H1 (cell line): ENCODE measurements at regions of chr15 and their contacts with region 1.

Region 1: DNA sequence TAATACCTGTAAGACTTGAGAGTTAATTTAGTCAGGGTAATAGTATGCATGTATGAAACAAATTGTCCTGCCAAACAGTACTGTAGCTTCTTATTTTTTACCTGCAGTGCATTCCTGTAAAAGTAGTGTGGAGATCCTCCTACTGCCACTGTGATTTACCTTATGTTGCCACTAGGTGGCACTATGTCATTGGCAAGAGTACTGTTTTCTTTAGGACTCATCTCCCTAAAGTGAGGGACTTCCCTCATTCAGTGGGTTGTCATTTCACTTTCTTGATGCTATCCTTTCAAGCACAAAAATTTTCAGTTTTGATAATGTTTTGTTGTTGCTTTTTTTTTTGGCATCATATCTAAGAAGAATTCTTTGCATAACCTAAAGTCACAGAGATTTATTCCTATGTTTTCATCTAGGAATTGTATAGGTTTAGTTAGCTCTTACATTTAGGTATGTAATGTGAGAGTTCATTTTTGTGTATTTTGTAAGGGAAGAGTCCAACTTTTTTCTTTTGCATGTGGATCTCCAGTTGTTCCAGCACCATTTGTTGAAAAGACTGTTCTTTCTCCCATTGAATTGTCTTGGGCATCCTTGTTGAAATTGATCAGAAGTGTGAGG is 105.7 kb downstream of the AKAP13 start:
- DNase-seq: peak in 1 of 2 experiments; percentile 69
- H3K4me3 ChIP-seq: no peak overlapping the region
- H3K27ac ChIP-seq: no peak overlapping the region
- H3K4me1 ChIP-seq: peaks cover 0 to 4% (median 0%) of the 10 kb centered on the region in 4 experiments; a peak in 2 of 7 replicates
- H3K27me3 ChIP-seq: no peaks in the 10 kb centered on the region
- CTCF ChIP-seq: peak in 2 of 3 experiments; percentile 68 to 72; a peak in 3 of 4 replicates
- EP300 ChIP-seq: no peak
- POLR2A ChIP-seq: no peak
- RAD21 ChIP-seq: peak; percentile 77 to 82

Region 2: DNA sequence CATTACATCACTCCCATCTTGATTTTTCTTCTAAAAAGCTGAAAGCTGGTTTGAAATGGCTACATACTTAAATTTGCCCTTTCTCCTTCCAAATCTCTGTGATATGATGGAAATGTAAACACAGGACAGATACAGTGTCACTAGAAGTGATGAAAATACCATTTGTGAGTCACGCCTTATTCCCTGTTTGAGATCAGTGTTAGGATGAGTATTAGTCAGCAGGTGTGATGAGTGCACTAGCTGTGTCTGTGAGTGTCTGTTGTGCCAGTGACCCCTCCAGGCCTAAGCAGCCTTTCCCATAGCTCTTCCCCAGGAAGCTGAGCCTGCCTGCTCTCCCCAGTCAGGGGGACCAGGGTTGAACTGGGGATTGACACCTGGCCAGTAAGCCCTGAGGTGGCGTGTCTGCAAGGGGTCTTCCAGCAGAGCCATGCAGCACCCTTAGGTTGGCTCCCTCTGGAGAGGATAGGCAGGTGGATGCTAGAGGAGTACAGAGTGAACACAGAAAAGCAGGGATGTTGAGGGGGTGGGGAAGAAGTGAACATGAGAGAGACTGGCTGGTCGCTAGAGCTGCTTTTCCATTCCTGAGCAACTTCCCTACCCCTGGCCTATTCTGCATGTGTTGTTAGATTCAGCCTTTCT is 412.4 kb before region 1 on chr15:
- CTCF ChIA-PET with region 1: no interaction called
- POLR2A ChIA-PET with region 1: no interaction called
- DNase-seq: no peak
- H3K4me3 ChIP-seq: no peak overlapping the region
- H3K27ac ChIP-seq: no peak overlapping the region
- H3K4me1 ChIP-seq: no peaks in the 10 kb centered on the region
- H3K27me3 ChIP-seq: no peaks in the 10 kb centered on the region
- CTCF ChIP-seq: no peak
- EP300 ChIP-seq: no peak
- POLR2A ChIP-seq: no peak
- RAD21 ChIP-seq: no peak

Region 3: DNA sequence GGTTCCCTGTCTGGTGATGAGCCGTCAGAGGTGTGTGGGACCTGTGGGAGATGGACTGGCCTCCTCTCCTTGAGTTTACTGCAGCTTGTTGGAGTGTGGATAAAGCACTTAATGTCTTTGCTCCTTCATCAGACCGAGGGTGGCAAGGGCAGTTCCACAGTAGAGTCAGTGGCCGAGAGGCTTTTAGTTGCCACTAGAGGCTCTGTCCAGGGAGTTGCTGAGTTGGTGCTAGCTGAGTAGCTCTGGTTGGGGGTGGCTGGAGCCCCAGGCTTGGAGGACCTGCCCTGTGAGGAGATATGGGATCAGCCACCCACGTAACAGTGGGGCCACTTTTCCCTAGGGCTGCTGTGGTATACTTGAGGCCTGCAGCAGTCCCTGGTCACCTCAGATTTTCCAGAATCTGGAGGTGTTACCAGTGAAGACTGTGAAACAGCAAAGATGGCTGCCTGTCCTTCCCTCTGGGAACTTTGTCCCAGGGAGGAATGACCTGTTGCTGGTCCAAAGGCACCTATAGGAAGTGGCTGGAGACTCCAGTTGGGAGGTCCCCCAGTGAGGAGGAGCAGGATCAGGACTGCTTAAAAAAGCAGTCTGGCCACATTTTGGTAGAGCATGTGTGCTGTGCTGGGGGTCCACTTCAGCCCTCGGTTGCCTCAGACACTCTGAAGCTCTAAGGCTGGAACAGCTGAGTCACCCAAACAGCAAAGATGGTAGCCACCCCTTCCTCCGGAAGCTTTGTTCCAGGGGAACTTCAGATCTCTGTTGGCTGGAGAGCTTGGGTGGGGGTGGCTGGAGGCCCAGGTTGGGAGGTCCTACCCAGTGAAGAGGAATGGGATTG is 32.8 kb before region 1 on chr15:
- CTCF ChIA-PET with region 1: no interaction called
- POLR2A ChIA-PET with region 1: no interaction called
- DNase-seq: no peak
- H3K4me3 ChIP-seq: no peak overlapping the region
- H3K27ac ChIP-seq: no peak overlapping the region
- H3K4me1 ChIP-seq: peaks cover 0 to 5% (median 0%) of the 10 kb centered on the region in 4 experiments; a peak in 2 of 7 replicates
- H3K27me3 ChIP-seq: no peaks in the 10 kb centered on the region
- CTCF ChIP-seq: no peak
- EP300 ChIP-seq: no peak
- POLR2A ChIP-seq: no peak
- RAD21 ChIP-seq: no peak

Region 4: DNA sequence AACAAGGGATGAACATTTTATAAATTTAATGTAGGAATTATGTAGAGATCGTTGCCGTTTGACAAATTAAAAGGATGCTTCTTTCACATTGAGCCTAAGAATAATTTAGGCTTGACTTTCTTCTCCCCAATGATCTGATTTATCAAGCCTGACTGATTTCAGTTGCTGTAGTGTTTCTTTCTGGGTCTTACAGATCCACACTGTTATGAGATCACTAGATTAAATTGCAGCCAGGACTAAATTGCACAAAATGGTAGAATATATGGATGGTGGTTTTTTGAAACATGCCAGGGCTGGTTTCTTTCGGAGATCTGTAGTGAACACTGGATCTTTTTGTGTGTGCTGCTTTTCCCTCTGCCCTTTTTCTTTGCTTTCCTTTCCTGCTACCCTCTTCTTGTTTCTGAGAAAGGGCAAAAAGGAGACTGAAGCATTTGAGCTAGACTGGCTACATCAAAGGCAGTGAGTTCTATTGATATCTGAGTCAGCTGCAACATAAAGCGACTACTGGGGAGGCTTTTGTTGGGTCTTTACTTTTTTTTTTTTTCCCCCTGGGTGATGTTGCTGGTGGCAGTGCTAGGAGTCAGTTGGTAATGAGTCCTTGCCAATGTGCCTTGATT is 22.7 kb before region 1 on chr15:
- CTCF ChIA-PET with region 1: no interaction called
- POLR2A ChIA-PET with region 1: no interaction called
- DNase-seq: no peak
- H3K4me3 ChIP-seq: no peak overlapping the region
- H3K27ac ChIP-seq: no peak overlapping the region
- H3K4me1 ChIP-seq: peaks cover 0 to 5% (median 2%) of the 10 kb centered on the region in 4 experiments; a peak in 5 of 7 replicates
- H3K27me3 ChIP-seq: no peaks in the 10 kb centered on the region
- CTCF ChIP-seq: no peak
- EP300 ChIP-seq: no peak
- POLR2A ChIP-seq: no peak
- RAD21 ChIP-seq: no peak

Region 5: GRCh38 chr15:85475317-85475701 is 10.8 kb before region 1 on chr15:
- CTCF ChIA-PET with region 1: interaction called, 28 read pairs
- POLR2A ChIA-PET with region 1: no interaction called
- DNase-seq: no peak
- H3K4me3 ChIP-seq: no peak overlapping the region
- H3K27ac ChIP-seq: no peak overlapping the region
- H3K4me1 ChIP-seq: peaks cover 0 to 9% (median 8%) of the 10 kb centered on the region in 4 experiments; a peak in 4 of 7 replicates
- H3K27me3 ChIP-seq: no peaks in the 10 kb centered on the region
- CTCF ChIP-seq: no peak
- EP300 ChIP-seq: no peak
- POLR2A ChIP-seq: no peak
- RAD21 ChIP-seq: no peak

Region 6: GRCh38 chr15:85497172-85497569 is 11.1 kb after region 1 on chr15:
- CTCF ChIA-PET with region 1: interaction called, 13 read pairs
- POLR2A ChIA-PET with region 1: interaction called, 3 read pairs
- DNase-seq: no peak
- H3K4me3 ChIP-seq: no peak overlapping the region
- H3K27ac ChIP-seq: no peak overlapping the region
- H3K4me1 ChIP-seq: peaks cover 0 to 17% (median 4%) of the 10 kb centered on the region in 4 experiments; a peak in 5 of 7 replicates
- H3K27me3 ChIP-seq: no peaks in the 10 kb centered on the region
- CTCF ChIP-seq: no peak
- EP300 ChIP-seq: no peak
- POLR2A ChIP-seq: no peak
- RAD21 ChIP-seq: no peak